B cell (primary cell): ENCODE measurements at regions of chr3 and their contacts with region 1.

Region 1: DNA sequence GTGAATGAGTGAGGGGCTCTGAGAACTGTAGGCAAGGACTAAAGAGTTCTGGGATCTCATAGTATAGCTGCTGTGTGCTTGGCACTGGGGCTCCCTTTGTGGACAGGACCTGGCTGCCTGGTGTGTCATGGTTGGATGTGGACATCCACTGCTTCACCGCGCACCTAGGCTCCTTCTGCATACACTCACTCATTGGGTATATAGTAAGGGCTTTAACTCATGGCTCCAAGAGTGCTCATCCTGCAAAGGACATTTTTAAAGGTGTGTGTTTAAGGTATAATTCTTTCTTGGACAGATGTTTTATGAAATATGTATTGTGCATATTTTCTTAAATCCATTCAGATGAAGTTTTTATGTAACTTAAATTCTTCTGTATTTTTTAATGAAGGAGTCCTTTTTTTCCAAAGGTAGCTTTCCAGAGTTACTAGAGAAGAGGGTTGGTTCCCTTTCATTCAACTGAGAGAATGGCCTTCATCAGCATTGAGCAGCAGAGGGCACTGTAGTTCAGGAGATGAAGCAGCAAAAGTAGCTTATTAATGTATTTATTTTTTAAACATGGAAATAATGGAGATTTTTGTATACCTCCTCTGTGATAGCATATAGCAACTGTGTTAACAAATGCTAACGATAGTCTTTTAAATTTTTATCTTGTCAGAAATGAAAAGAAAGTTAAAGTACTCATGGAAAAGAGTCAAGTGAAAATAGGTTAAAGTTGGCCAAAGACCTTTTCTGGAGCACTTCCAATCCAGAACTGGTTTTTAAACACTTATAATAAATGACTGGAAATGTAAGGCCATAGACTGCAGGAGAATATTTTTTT is 25.2 kb downstream of the OXNAD1 start:
- DNase-seq: peak; percentile 69
- ATAC-seq: peak; percentile 63
- H3K4me3 ChIP-seq: no peak overlapping the region
- H3K4me3 Mint-ChIP-seq: no peak overlapping the region
- H3K27ac ChIP-seq: peak overlapping the region in 1 of 2 donors; percentile 39
- H3K27ac Mint-ChIP-seq: no peak overlapping the region
- H3K4me1 ChIP-seq: peaks cover 23 to 29% of the 10 kb centered on the region in 2 donors
- H3K4me1 Mint-ChIP-seq: peaks cover 34% of the 10 kb centered on the region
- H3K27me3 ChIP-seq: no peaks in the 10 kb centered on the region
- H3K27me3 Mint-ChIP-seq: no peaks in the 10 kb centered on the region
- CTCF ChIP-seq: peak; percentile 96

Region 2: DNA sequence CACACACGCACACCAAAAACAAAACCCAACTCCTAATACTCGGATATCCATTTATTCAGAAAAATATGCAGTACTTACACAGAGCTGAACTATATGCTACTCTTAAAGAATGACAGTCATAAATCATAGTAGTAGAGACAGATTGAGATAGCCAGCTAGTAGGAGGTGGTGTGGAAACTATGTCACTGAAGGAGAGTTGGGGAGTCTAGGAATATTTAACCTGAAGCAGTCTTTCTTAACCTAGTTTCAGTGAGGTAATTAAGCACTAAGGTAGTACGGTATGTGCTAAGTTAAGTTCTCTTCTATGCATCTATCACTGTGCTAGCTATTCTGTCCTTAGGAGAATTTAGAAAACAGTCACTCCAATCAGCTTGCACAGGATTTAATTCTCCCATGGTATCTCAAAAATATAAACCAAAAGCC is 546.6 kb before region 1 on chr3:
- CTCF ChIA-PET with region 1: no interaction called
- POLR2A ChIA-PET with region 1: no interaction called
- intact Hi-C with region 1: no loop called
- DNase-seq: no peak
- ATAC-seq: no peak
- H3K4me3 ChIP-seq: no peak overlapping the region
- H3K4me3 Mint-ChIP-seq: no peak overlapping the region
- H3K27ac ChIP-seq: no peak overlapping the region
- H3K27ac Mint-ChIP-seq: no peak overlapping the region
- H3K4me1 ChIP-seq: no peaks in the 10 kb centered on the region
- H3K4me1 Mint-ChIP-seq: peaks cover 17% of the 10 kb centered on the region
- H3K27me3 ChIP-seq: no peaks in the 10 kb centered on the region
- H3K27me3 Mint-ChIP-seq: no peaks in the 10 kb centered on the region
- CTCF ChIP-seq: no peak

Region 3: GRCh38 chr3:16264708-16265454 is 25.3 kb before region 1 on chr3 and contains the starts of genes DPH3 and OXNAD1:
- CTCF ChIA-PET with region 1: interaction called, 76 read pairs
- POLR2A ChIA-PET with region 1: no interaction called
- intact Hi-C with region 1: loop called (anchors 1 kb)
- DNase-seq: peak; percentile 99
- ATAC-seq: peak; percentile 96
- H3K4me3 ChIP-seq: peak within 1 kb of the TSS; percentile 80 to 97 (median 90)
- H3K4me3 Mint-ChIP-seq: peak within 1 kb of the TSS; percentile 99
- H3K27ac ChIP-seq: peak within 1 kb of the TSS; percentile 85 to 97
- H3K27ac Mint-ChIP-seq: peak within 1 kb of the TSS; percentile 99
- H3K4me1 ChIP-seq: peaks cover 12 to 13% of the 10 kb centered on the region in 2 donors
- H3K4me1 Mint-ChIP-seq: peaks cover 25% of the 10 kb centered on the region
- H3K27me3 ChIP-seq: no peaks in the 10 kb centered on the region
- H3K27me3 Mint-ChIP-seq: no peaks in the 10 kb centered on the region
- CTCF ChIP-seq: no peak
- total RNA-seq, gene DPH3: 11.5 and 12.9 TPM in 2 replicates
- total RNA-seq, gene OXNAD1: 11.2 and 12.3 TPM in 2 replicates

Region 4: DNA sequence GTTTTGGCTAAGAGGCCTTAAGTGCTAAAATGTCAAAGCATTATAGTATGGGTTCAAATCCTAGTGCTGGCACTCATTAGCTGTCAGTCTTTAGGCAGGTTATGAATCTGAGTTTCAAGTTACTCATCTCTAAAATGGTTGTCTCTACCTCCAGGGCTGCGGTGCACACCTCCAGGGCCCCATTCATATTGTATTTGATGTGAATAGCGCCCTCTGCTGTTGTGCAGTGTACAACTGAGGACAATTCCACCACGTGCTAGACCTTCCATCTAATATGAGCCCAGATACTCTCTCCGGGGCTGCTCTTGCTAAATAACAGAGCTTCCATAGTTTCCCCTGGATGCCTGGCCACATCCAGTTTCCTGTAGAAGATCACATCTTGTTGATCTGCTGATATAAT is 29.1 kb after region 1 on chr3:
- CTCF ChIA-PET with region 1: interaction called, 26 read pairs
- POLR2A ChIA-PET with region 1: no interaction called
- intact Hi-C with region 1: no loop called
- DNase-seq: peak; percentile 43
- ATAC-seq: no peak
- H3K4me3 ChIP-seq: no peak overlapping the region
- H3K4me3 Mint-ChIP-seq: no peak overlapping the region
- H3K27ac ChIP-seq: no peak overlapping the region
- H3K27ac Mint-ChIP-seq: no peak overlapping the region
- H3K4me1 ChIP-seq: no peaks in the 10 kb centered on the region
- H3K4me1 Mint-ChIP-seq: no peaks in the 10 kb centered on the region
- H3K27me3 ChIP-seq: no peaks in the 10 kb centered on the region
- H3K27me3 Mint-ChIP-seq: no peaks in the 10 kb centered on the region
- CTCF ChIP-seq: peak; percentile 43

Region 5: DNA sequence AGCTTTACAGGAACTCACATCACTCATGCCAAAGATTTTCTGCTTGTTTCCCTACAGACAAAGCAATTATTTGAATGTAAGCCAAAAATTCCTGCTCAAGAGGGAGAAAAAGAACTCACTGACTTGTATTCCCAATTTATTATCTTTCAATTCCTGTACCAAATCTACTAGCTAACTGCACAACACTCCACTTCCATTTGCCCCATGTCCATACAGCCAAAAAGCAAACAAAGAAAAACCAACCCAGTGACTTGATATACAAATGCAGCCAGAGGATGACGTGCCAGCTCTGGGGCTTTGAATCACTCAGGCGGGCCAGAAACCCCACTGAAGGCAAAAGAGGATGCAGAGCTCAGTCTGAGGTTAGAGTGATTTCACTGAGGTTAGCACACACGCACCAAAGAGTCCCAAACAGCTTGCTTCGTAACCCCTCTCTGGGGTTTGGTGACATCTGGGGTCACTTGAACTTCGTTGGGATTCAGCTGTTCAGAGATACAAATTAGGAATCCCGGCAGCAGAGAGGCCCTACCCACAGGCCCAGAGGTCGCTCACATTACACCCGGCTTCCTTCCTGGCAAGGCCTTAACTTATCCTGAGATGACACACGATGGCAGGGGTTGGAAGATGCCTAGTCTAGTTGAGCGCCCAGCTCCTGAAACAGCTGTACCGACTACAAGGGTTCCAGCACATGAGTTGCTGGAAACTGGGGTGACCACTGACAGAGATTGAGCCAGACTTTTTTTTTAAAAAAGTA is 221.6 kb after region 1 on chr3:
- CTCF ChIA-PET with region 1: interaction called, 21 read pairs
- POLR2A ChIA-PET with region 1: no interaction called
- intact Hi-C with region 1: no loop called
- DNase-seq: peak; percentile 95
- ATAC-seq: peak; percentile 66
- H3K4me3 ChIP-seq: peak overlapping the region in 4 of 5 experiments; percentile 82 to 98 (median 91)
- H3K4me3 Mint-ChIP-seq: peak overlapping the region; percentile 74
- H3K27ac ChIP-seq: peak overlapping the region; percentile 89 to 97
- H3K27ac Mint-ChIP-seq: peak overlapping the region; percentile 71
- H3K4me1 ChIP-seq: peaks cover 80 to 87% of the 10 kb centered on the region in 2 donors
- H3K4me1 Mint-ChIP-seq: peaks cover 82% of the 10 kb centered on the region
- H3K27me3 ChIP-seq: no peaks in the 10 kb centered on the region
- H3K27me3 Mint-ChIP-seq: no peaks in the 10 kb centered on the region
- CTCF ChIP-seq: no peak

Region 6: DNA sequence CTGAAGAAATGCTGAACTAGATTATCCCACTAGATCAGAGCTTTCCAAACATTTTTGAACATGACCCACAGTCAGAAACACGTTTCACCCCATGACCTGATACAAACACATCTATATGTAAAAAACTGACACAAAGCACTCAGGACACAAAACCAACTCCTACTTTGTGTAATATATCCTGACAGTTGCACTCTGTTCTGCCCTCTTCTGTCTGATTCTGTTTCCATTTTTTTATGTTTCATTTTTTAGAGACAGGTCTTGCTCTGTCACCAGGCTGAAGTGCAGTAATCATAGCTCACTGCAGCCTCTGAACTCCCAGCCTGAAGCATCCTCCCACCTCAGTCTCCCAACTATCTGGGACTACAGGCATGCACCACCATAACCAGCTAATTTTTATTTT is 239.0 kb after region 1 on chr3:
- CTCF ChIA-PET with region 1: interaction called, 70 read pairs
- POLR2A ChIA-PET with region 1: no interaction called
- intact Hi-C with region 1: loop called (anchors 1 kb)
- DNase-seq: peak; percentile 52
- ATAC-seq: no peak
- H3K4me3 ChIP-seq: no peak overlapping the region
- H3K4me3 Mint-ChIP-seq: no peak overlapping the region
- H3K27ac ChIP-seq: no peak overlapping the region
- H3K27ac Mint-ChIP-seq: no peak overlapping the region
- H3K4me1 ChIP-seq: peaks cover 14 to 19% of the 10 kb centered on the region in 2 donors
- H3K4me1 Mint-ChIP-seq: peaks cover 15% of the 10 kb centered on the region
- H3K27me3 ChIP-seq: no peaks in the 10 kb centered on the region
- H3K27me3 Mint-ChIP-seq: no peaks in the 10 kb centered on the region
- CTCF ChIP-seq: peak; percentile 47

Region 7: DNA sequence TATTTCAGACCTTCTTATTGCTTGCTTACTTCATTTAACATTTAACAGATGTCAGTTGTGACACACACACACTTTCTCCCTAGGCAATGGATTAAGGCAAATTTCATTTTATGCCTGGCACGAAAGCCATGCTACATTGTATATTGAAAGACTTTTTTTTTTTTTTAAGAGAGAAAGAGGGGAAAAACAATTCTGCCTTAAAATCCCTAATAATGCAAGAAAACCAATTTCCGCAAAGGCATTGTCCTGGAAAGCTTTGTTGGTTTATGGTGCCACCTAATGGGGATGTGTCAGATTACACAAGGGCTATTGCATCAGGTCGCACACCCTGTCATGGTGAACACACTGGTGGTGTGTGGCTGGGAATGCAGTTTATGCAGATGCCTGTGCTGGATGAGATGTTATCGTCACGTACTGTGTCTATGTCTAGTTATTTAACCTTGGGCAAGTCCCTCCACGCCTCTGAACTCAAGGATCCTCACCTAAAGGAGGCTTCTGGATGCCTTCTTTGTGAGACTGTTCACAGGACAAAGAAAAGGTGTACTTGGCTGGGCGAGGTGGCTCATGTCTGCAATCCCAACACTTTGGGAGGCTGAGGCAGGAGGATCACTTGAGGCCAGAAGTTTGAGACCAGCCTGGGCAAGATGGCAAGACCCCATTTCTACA is 260.6 kb after region 1 on chr3:
- CTCF ChIA-PET with region 1: interaction called, 220 read pairs
- POLR2A ChIA-PET with region 1: interaction called, 4 read pairs
- intact Hi-C with region 1: loop called (anchors 1 kb)
- DNase-seq: peak; percentile 86
- ATAC-seq: peak; percentile 90
- H3K4me3 ChIP-seq: no peak overlapping the region
- H3K4me3 Mint-ChIP-seq: no peak overlapping the region
- H3K27ac ChIP-seq: no peak overlapping the region
- H3K27ac Mint-ChIP-seq: peak overlapping the region; percentile 23
- H3K4me1 ChIP-seq: peaks cover 0 to 3% of the 10 kb centered on the region in 2 donors
- H3K4me1 Mint-ChIP-seq: peaks cover 2% of the 10 kb centered on the region
- H3K27me3 ChIP-seq: no peaks in the 10 kb centered on the region
- H3K27me3 Mint-ChIP-seq: no peaks in the 10 kb centered on the region
- CTCF ChIP-seq: peak; percentile 90